ENCODE measurements at regions of chr17 and their contacts with region 1.

Region 1: DNA sequence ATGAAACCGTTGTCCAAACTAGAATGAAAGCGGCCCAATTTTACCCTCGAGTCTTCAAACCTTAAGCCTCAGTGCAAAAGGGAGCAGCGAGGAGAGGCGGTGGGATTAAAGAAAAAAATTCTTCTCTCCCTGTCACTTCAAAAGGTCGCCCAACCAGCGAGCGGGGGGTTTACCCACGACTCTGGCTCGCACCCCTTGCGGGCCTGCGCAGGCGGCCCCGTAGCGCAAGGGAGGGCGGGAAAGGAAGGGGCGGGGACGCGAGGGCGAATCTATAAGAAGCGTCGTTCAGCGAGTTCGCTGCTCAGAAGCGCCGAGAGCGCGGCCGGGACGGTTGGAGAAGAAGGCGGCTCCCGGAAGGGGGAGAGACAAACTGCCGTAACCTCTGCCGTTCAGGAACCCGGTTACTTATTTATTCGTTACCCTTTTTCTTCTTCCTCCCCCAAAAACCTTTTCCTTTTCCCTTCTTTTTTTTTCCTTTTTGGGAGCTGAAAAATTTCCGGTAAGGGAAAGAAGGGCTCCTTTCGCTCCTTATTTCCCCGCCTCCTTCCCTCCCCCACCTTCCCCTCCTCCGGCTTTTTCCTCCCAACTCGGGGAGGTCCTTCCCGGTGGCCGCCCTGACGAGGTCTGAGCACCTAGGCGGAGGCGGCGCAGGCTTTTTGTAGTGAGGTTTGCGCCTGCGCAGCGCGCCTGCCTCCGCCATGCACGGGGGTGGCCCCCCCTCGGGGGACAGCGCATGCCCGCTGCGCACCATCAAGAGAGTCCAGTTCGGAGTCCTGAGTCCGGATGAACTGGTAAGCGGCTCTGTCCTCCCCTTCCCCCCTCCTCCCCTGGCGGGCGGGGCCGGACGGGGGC is at the start of gene POLR2A:
- DNase-seq: peak; percentile 95 to 99 (median 98)
- H3K4me3 ChIP-seq: peak within 1 kb of the TSS; percentile 91
- H3K4me3 Mint-ChIP-seq: peak within 1 kb of the TSS; percentile 96 to 100 (median 98)
- H3K27ac ChIP-seq: peak within 1 kb of the TSS; percentile 98
- H3K27ac Mint-ChIP-seq: peak within 1 kb of the TSS; percentile 99 to 100 (median 100)
- H3K4me1 ChIP-seq: peaks cover 49% of the 10 kb centered on the region
- H3K4me1 Mint-ChIP-seq: peaks cover 56 to 80% (median 73%) of the 10 kb centered on the region in 3 donors
- H3K27me3 ChIP-seq: no peaks in the 10 kb centered on the region
- H3K27me3 Mint-ChIP-seq: peaks cover 0 to 12% of the 10 kb centered on the region in 2 donors
- total RNA-seq, gene POLR2A: 190 to 192 TPM

Region 2: GRCh38 chr17:7329374-7329996 is 154.8 kb before region 1 on chr17:
- CTCF ChIA-PET with region 1: no interaction called
- POLR2A ChIA-PET with region 1: interaction called, 13 read pairs
- DNase-seq: peak; percentile 92 to 98 (median 97)
- H3K4me3 ChIP-seq: peak overlapping the region; percentile 79
- H3K4me3 Mint-ChIP-seq: peak overlapping the region; percentile 91 to 99 (median 97)
- H3K27ac ChIP-seq: peak overlapping the region; percentile 82
- H3K27ac Mint-ChIP-seq: peak overlapping the region; percentile 95 to 99 (median 97)
- H3K4me1 ChIP-seq: peaks cover 43% of the 10 kb centered on the region
- H3K4me1 Mint-ChIP-seq: peaks cover 33 to 54% (median 42%) of the 10 kb centered on the region in 3 donors
- H3K27me3 ChIP-seq: no peaks in the 10 kb centered on the region
- H3K27me3 Mint-ChIP-seq: peaks cover 0 to 2% of the 10 kb centered on the region in 2 donors

Region 3: GRCh38 chr17:7426896-7427489 is 57.3 kb before region 1 on chr17:
- CTCF ChIA-PET with region 1: no interaction called
- POLR2A ChIA-PET with region 1: no interaction called
- DNase-seq: no peak
- H3K4me3 ChIP-seq: no peak overlapping the region
- H3K4me3 Mint-ChIP-seq: no peak overlapping the region
- H3K27ac ChIP-seq: no peak overlapping the region
- H3K27ac Mint-ChIP-seq: no peak overlapping the region
- H3K4me1 ChIP-seq: no peaks in the 10 kb centered on the region
- H3K4me1 Mint-ChIP-seq: no peaks in the 10 kb centered on the region
- H3K27me3 ChIP-seq: no peaks in the 10 kb centered on the region
- H3K27me3 Mint-ChIP-seq: peaks cover 0 to 3% of the 10 kb centered on the region in 2 donors

Region 4: DNA sequence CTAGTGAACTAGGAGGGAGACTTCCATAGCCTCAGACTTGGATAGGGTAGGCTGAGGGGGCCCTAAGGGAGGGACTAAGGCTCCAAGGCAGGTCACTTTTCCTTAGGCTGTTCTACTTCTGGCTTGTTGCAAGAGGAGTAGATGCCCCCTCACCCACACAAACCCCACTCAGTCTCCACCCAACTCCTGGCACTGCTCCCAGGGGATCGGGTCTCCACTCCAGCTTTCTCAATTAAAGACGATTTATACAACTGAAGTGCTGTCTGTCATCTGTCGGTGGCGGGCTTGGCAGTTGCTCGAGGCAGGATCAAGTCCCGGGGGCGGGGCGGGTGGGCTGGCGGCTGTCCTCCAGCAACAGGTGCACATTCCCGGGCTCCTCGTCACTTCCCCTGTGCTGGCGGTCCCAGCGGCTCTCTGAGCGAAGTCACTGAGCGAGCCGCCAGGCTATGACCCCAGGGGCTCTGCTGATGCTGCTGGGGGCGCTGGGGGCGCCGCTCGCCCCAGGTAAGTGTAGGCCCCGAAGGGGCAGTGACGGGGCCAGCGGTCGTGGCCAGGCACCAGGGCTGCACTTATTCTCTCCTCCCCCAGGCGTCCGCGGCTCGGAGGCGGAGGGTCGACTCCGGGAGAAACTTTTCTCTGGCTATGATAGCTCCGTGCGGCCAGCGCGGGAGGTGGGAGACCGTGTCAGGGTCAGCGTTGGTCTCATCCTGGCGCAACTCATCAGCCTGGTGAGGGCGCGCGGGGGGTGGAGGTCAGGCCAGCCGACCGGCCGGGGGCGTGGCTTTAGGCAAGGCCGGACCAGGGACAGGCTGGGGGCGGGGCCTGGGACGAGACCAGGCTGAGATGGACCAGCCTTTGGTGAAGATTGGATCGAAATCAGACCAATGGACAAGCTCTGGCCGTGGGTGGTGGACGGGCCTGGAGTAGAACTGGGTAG is 39.3 kb before region 1 on chr17 and contains the start of gene CHRNB1:
- CTCF ChIA-PET with region 1: interaction called, 5 read pairs
- POLR2A ChIA-PET with region 1: interaction called, 12 read pairs
- DNase-seq: peak in 1 of 5 donors; percentile 21
- H3K4me3 ChIP-seq: no peak within 1 kb of the TSS
- H3K4me3 Mint-ChIP-seq: peak within 1 kb of the TSS; percentile 53 to 88 (median 77)
- H3K27ac ChIP-seq: no peak within 1 kb of the TSS
- H3K27ac Mint-ChIP-seq: peak within 1 kb of the TSS in 4 of 8 donors; percentile 35 to 74 (median 66)
- H3K4me1 ChIP-seq: peaks cover 22% of the 10 kb centered on the region
- H3K4me1 Mint-ChIP-seq: peaks cover 17 to 34% (median 24%) of the 10 kb centered on the region in 3 donors
- H3K27me3 ChIP-seq: peaks cover 46% of the 10 kb centered on the region
- H3K27me3 Mint-ChIP-seq: peaks cover 43 to 73% of the 10 kb centered on the region in 2 donors
- total RNA-seq, gene CHRNB1: 6.0 to 6.3 TPM

Region 5: DNA sequence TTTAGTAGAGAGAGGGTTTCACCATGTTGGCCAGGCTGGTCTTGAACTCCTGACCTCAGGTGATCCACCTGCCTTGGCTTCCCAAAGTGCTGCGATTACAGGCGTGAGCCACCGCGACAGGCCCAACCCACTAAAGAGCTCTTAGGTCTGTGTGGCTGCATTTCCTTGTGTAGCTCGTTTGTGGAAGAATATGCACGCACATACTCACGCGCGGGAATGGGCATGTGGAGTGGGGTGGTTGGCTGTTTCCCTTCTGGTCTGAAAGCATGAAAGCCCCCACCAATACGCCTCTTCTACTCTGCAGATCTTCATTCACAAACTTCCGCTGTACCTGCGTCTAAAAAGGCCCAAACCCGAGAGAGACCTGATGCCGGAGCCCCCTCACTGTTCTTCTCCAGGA is 29.3 kb before region 1 on chr17:
- CTCF ChIA-PET with region 1: interaction called, 7 read pairs
- POLR2A ChIA-PET with region 1: interaction called, 29 read pairs
- DNase-seq: no peak
- H3K4me3 ChIP-seq: peak overlapping the region; percentile 95
- H3K4me3 Mint-ChIP-seq: peak overlapping the region; percentile 86 to 100 (median 98)
- H3K27ac ChIP-seq: peak overlapping the region; percentile 72
- H3K27ac Mint-ChIP-seq: peak overlapping the region; percentile 50 to 99 (median 95)
- H3K4me1 ChIP-seq: peaks cover 15% of the 10 kb centered on the region
- H3K4me1 Mint-ChIP-seq: peaks cover 18 to 23% (median 22%) of the 10 kb centered on the region in 3 donors
- H3K27me3 ChIP-seq: no peaks in the 10 kb centered on the region
- H3K27me3 Mint-ChIP-seq: no peaks in the 10 kb centered on the region

Region 6: DNA sequence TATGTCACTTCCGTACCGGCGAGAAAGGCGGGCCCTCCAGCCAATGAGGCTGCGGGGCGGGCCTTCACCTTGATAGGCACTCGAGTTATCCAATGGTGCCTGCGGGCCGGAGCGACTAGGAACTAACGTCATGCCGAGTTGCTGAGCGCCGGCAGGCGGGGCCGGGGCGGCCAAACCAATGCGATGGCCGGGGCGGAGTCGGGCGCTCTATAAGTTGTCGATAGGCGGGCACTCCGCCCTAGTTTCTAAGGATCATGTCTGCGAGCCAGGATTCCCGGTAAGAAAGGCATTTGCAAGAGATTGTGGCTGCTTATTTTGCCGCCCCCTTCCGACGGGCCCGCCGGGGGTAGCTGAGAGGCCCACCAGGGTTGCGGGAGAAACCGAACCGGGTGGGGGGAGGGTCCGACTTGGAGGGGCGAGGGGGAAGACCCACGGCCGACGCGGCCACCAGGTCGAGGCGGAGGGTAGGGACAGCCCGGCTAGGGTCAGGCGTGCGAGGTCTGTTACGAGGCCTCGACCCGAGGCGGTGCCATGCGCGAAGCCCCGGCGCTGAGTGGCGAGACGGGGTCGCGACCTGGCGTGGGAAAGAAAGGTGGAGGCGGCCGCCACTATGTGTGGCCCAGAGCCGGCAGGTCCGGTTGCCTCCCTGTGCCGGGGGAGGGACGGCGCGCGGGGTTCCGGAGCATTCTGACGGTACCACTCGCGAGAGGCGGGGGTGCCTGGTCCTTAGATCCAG is 88.5 kb after region 1 on chr17:
- CTCF ChIA-PET with region 1: no interaction called
- POLR2A ChIA-PET with region 1: interaction called, 10 read pairs
- DNase-seq: peak; percentile 99 to 100 (median 100)
- H3K4me3 ChIP-seq: peak overlapping the region; percentile 98
- H3K4me3 Mint-ChIP-seq: peak overlapping the region; percentile 93 to 98 (median 96)
- H3K27ac ChIP-seq: peak overlapping the region; percentile 99
- H3K27ac Mint-ChIP-seq: peak overlapping the region; percentile 96 to 100 (median 98)
- H3K4me1 ChIP-seq: peaks cover 31% of the 10 kb centered on the region
- H3K4me1 Mint-ChIP-seq: peaks cover 39 to 55% (median 48%) of the 10 kb centered on the region in 3 donors
- H3K27me3 ChIP-seq: no peaks in the 10 kb centered on the region
- H3K27me3 Mint-ChIP-seq: peaks cover 0 to 7% of the 10 kb centered on the region in 2 donors

Measured in CD8-positive, alpha-beta memory T cell (primary cell).